HepG2 (cell line): ENCODE measurements at regions of chr17 and their contacts with region 1.

Region 1: GRCh38 chr17:76005263-76006149 is 4.9 kb downstream of the CDK3 start:
- DNase-seq: peak; percentile 82
- ATAC-seq: peak; percentile 42
- H3K4me3 ChIP-seq: no peak overlapping the region
- H3K27ac ChIP-seq: peak overlapping the region; percentile 83
- H3K4me1 ChIP-seq: peaks cover 55% of the 10 kb centered on the region
- H3K27me3 ChIP-seq: no peaks in the 10 kb centered on the region
- CTCF ChIP-seq: peak; percentile 96
- EP300 ChIP-seq: no peak
- POLR2A ChIP-seq: no peak
- RAD21 ChIP-seq: peak; percentile 97

Region 2: DNA sequence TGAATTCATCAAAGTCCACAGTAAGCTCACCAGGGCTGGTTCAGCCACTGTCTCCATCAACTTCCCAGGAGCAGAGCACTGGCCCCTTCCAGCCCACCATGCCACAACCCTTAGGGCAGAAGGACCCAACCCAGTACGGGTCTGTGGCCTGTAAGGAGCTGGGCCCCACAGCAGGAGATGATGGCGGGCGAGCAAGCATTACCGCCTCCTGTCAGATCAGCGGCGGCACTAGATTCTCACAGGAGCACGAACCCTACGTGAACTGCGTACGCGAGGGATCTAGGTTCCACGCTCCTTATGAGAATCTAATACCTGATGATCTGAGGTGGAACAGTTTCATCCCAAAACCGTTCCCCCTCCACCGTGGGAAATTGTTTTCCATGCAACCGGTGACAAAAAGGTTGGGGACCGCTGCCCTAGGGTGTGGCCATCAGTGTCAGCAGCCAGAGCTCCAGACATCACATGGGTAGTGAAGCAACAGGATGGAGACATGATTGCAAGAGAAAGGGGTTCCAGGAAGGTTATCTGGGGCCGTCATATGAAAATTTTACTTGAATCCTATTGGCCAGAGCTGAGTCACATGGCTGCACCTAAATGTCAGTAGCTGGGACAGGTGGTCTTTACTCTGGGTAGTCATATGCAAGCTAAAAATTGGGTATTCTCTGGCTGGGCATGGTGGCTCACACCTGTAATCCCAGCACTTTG is 703.9 kb before region 1 on chr17:
- CTCF ChIA-PET with region 1: no interaction called
- POLR2A ChIA-PET with region 1: no interaction called
- in situ Hi-C with region 1: no loop called
- intact Hi-C with region 1: no loop called
- DNase-seq: no peak
- ATAC-seq: peak; percentile 25; the same call in 2 of the 3 replicates
- H3K4me3 ChIP-seq: no peak overlapping the region
- H3K27ac ChIP-seq: no peak overlapping the region
- H3K4me1 ChIP-seq: peaks cover 17% of the 10 kb centered on the region
- H3K27me3 ChIP-seq: no peaks in the 10 kb centered on the region
- CTCF ChIP-seq: no peak
- EP300 ChIP-seq: no peak
- POLR2A ChIP-seq: no peak
- RAD21 ChIP-seq: no peak

Region 3: DNA sequence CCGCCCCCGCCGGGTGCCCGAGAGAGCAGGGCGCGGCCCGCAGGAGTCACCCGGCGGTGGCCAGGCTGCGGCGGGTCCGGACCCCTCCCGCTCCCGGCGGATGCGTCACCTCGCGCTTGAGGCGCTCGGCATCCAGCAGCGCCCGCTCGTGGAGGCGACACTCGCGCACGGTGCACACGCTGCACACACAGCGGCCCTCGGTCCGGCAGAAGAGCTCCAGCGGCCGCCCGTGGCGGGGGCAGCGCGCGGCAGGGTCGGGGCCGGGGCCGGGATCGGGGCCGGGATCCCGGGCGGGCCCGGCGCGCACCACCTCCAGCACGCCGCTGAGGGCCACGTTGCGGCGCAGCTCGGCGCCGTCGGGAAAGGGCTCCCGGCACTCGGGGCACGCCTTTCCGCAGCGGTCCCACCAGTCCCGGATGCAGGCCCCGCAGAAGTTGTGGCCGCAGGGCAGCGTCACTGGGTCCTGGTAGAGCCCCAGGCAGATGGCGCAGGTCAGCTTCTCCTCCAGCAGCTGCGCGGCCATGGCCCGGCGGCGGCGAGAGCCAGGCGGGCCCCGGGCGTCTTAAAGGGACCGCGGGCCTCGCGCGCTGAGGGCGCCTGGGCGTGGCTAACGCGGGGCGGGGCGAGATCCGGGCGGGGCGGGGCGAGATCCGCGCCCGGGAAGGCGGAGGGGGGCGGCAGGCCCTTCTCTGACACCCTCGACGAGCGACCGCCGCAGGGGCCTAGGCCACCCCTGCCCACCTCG is 108.9 kb before region 1 on chr17 and contains the start of gene TRIM65:
- CTCF ChIA-PET with region 1: interaction called, 3 read pairs
- POLR2A ChIA-PET with region 1: interaction called, 19 read pairs
- in situ Hi-C with region 1: no loop called
- intact Hi-C with region 1: no loop called
- DNase-seq: peak; percentile 56
- ATAC-seq: peak; percentile 18
- H3K4me3 ChIP-seq: peak within 1 kb of the TSS; percentile 68 to 83 (median 75)
- H3K27ac ChIP-seq: peak within 1 kb of the TSS; percentile 79
- H3K4me1 ChIP-seq: peaks cover 46% of the 10 kb centered on the region
- H3K27me3 ChIP-seq: no peaks in the 10 kb centered on the region
- CTCF ChIP-seq: peak; percentile 64
- EP300 ChIP-seq: no peak
- POLR2A ChIP-seq: peak in 1 of 2 experiments; percentile 92; a peak in 2 of 4 replicates
- RAD21 ChIP-seq: peak; percentile 84
- total RNA-seq, gene TRIM65: 22.4 and 24.6 TPM in 2 replicates

Region 4: GRCh38 chr17:75940724-75941441 is 64.6 kb before region 1 on chr17 and contains the start of gene FBF1:
- CTCF ChIA-PET with region 1: no interaction called
- POLR2A ChIA-PET with region 1: interaction called, 15 read pairs
- in situ Hi-C with region 1: no loop called
- intact Hi-C with region 1: no loop called
- DNase-seq: peak; percentile 93
- ATAC-seq: peak; percentile 96
- H3K4me3 ChIP-seq: peak within 1 kb of the TSS; percentile 73 to 83 (median 79)
- H3K27ac ChIP-seq: peak within 1 kb of the TSS; percentile 49
- H3K4me1 ChIP-seq: peaks cover 27% of the 10 kb centered on the region
- H3K27me3 ChIP-seq: no peaks in the 10 kb centered on the region; a peak in 1 of 5 replicates
- CTCF ChIP-seq: peak; percentile 58
- EP300 ChIP-seq: peak in 1 of 2 experiments; percentile 31; a peak in 1 of 4 replicates
- POLR2A ChIP-seq: peak; percentile 89 to 94
- RAD21 ChIP-seq: peak; percentile 70
- total RNA-seq, gene FBF1: 3.5 and 8.1 TPM in 2 replicates

Region 5: DNA sequence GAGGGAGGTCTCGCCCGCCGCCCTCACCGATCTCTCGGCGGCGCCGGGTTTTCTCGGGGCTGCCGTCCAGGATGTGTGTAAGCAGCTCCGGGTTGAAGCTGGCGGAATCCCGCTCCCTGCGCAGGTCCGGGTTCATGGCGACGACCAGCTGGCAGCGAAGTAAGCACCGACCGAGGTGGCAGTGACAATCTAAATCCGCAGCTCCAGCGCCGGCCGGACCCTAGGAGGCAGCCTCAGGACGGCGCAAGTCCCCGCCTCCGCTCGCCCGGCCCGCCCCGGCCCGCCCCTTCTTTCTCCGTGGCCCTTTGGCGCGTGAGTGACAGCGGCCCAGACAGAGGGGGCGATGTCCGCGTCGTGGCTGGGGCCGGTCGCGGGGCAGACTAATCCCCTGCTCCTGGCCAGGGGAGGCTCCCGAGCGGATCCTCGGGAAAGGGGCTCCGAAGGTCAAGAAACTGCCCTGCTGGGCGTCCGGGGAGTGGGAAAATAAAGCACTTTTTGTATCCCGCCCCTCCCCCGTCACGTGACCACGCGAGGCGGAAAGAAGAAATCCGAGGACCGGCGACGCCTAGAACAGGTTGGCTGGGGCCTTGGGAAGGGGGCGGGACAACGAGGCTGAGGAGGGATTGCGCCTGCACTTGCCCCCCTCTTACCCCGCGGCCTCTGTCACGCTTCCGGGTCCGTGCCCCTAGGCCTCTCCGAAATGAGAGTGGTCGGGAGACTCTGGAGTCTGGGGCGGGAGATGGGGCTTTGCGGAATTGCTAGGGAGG is 26.4 kb before region 1 on chr17 and contains the starts of genes ACOX1 and TEN1:
- CTCF ChIA-PET with region 1: interaction called, 4 read pairs
- POLR2A ChIA-PET with region 1: interaction called, 481 read pairs
- in situ Hi-C with region 1: no loop called
- intact Hi-C with region 1: loop called (anchors 1 kb)
- DNase-seq: peak; percentile 98
- ATAC-seq: peak; percentile 87
- H3K4me3 ChIP-seq: peak within 1 kb of the TSS; percentile 74 to 98 (median 93)
- H3K27ac ChIP-seq: peak within 1 kb of the TSS; percentile 99
- H3K4me1 ChIP-seq: peaks cover 80% of the 10 kb centered on the region
- H3K27me3 ChIP-seq: no peaks in the 10 kb centered on the region; a peak in 1 of 5 replicates
- CTCF ChIP-seq: peak; percentile 72
- EP300 ChIP-seq: peak; percentile 12 to 52; a peak in 3 of 4 replicates
- POLR2A ChIP-seq: peak; percentile 87 to 97
- RAD21 ChIP-seq: no peak; the same call in none of the 2 replicates
- total RNA-seq, gene ACOX1: 120 and 156 TPM in 2 replicates
- total RNA-seq, gene TEN1: 14.7 and 18.0 TPM in 2 replicates

Region 6: GRCh38 chr17:76039121-76039520 is 33.6 kb after region 1 on chr17:
- CTCF ChIA-PET with region 1: no interaction called
- POLR2A ChIA-PET with region 1: no interaction called
- in situ Hi-C with region 1: no loop called
- intact Hi-C with region 1: no loop called
- DNase-seq: no peak
- ATAC-seq: no peak; the same call in 2 of the 3 replicates
- H3K4me3 ChIP-seq: no peak overlapping the region
- H3K27ac ChIP-seq: no peak overlapping the region
- H3K4me1 ChIP-seq: peaks cover under 1% of the 10 kb centered on the region; the same call in 1 of the 2 replicates
- H3K27me3 ChIP-seq: no peaks in the 10 kb centered on the region
- CTCF ChIP-seq: no peak
- EP300 ChIP-seq: no peak
- POLR2A ChIP-seq: no peak
- RAD21 ChIP-seq: no peak